MCF 10A (cell line): ENCODE measurements at regions of chr7 and their contacts with region 1.

Region 1: DNA sequence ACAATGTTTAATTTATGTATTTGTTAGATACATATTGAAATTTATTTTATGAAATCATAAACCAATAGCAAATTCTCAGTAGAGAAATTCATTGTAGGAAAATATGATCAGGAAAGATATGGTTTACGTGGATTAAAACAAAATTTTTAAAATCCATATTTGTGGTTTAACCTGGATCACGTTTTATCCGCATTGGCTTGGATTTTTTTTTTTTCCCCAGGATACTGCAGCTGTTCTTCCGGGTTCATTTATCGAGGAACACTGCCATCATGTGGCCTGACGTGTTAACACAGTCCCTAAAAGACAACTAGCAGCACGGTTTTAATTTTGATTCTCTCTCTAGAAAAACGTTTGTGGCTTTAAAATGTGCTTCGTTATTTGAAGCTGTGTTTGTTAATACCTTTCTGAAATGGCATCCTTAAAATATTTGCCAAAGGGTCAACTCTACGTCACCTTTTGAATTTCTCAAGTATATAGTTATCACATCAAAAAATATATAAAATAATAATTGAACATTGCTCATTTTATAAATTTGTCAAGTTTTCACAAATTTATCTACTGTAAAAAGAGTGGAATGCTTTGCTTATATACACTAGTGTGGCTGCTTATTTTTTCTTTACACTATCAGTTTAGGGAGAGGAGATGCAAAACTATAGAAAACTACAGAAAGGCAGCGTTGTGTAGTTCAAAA is 8.7 kb upstream of the ASB4 start:
- DNase-seq: peak; percentile 79
- H3K4me3 Mint-ChIP-seq: no peak overlapping the region
- H3K27ac Mint-ChIP-seq: no peak overlapping the region
- H3K4me1 Mint-ChIP-seq: peaks cover 10% of the 10 kb centered on the region
- H3K27me3 Mint-ChIP-seq: no peaks in the 10 kb centered on the region
- CTCF ChIP-seq: peak; percentile 72

Region 2: GRCh38 chr7:95041031-95041430 is 436.0 kb before region 1 on chr7:
- CTCF ChIA-PET with region 1: no interaction called
- POLR2A ChIA-PET with region 1: no interaction called
- intact Hi-C with region 1: no loop called
- DNase-seq: no peak
- H3K4me3 Mint-ChIP-seq: no peak overlapping the region
- H3K27ac Mint-ChIP-seq: no peak overlapping the region
- H3K4me1 Mint-ChIP-seq: no peaks in the 10 kb centered on the region
- H3K27me3 Mint-ChIP-seq: no peaks in the 10 kb centered on the region
- CTCF ChIP-seq: no peak

Region 3: GRCh38 chr7:95199779-95200558 is 277.1 kb before region 1 on chr7:
- CTCF ChIA-PET with region 1: interaction called, 7 read pairs
- POLR2A ChIA-PET with region 1: no interaction called
- intact Hi-C with region 1: loop called (anchors 1 kb)
- DNase-seq: peak; percentile 68
- H3K4me3 Mint-ChIP-seq: no peak overlapping the region
- H3K27ac Mint-ChIP-seq: no peak overlapping the region
- H3K4me1 Mint-ChIP-seq: no peaks in the 10 kb centered on the region
- H3K27me3 Mint-ChIP-seq: peaks cover 17% of the 10 kb centered on the region
- CTCF ChIP-seq: peak; percentile 48

Region 4: DNA sequence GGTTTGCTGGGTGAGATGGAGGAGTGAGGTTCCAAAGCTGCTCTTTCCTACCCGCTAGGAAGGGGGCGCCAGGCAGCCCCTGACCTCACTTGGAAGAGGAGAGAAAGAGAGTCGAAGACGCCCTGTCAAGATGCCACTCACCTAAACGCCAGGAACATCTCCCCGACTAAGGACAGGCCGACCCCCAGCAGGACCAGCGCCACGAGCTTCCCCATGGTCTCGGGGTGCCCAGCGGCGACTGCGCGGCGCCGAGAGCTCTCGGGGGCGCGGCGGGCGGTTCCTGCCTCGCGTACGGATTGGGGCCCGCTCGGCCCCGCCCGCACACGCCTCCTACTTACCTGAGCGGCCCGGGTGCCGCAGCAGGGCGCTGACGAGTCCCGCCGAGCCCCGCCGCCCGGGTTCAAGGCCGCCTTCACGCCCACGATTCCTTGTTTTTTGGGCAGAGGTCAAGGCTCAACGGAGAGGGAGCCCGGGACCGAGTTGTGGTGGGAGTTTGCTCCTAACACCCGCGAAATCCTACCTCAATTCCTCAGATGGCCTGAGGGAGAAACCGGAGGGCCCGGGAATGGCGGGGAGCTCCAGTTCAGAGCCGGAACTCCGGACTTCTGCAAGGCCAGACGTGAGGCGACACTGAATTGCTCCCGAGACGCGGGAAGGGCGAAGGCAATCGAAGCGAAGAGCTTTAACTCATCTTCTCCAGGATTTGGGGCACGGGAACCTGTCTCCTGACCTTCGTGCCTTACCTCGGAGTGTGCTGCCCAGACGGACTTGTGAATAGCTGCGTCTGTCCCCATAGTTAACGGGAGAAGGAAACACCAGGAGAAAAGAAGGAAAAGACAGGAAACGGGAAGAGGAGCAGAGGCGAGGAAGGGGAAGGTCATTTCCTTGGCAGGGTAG is 80.7 kb before region 1 on chr7 and contains the start of gene PON3:
- CTCF ChIA-PET with region 1: interaction called, 22 read pairs
- POLR2A ChIA-PET with region 1: interaction called, 5 read pairs
- intact Hi-C with region 1: loop called (anchors 10 kb)
- DNase-seq: no peak
- H3K4me3 Mint-ChIP-seq: no peak within 1 kb of the TSS
- H3K27ac Mint-ChIP-seq: no peak within 1 kb of the TSS
- H3K4me1 Mint-ChIP-seq: peaks cover 6% of the 10 kb centered on the region
- H3K27me3 Mint-ChIP-seq: no peaks in the 10 kb centered on the region
- CTCF ChIP-seq: no peak
- total RNA-seq, gene PON3: not detected in 2 replicates

Region 5: DNA sequence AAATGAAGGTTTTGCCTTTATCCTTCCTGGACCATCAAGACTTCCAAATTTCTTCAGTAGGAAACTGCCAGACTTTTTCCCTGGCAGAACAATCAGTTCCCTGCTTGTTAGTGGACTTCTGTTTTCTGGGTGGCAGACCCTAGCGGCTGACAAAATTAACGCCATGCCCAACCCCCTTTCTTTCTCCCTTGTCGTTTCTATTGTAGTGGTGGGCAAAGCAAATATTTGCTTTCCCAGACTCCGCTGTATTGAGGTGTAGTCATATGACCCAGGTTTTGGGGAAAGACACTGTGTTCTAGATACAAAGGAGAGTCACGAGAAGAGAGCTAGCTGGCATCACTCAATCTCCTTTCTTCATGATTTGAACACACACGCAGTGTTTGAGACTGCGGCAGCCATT is 49.9 kb before region 1 on chr7:
- CTCF ChIA-PET with region 1: interaction called, 11 read pairs
- POLR2A ChIA-PET with region 1: interaction called, 4 read pairs
- intact Hi-C with region 1: no loop called
- DNase-seq: no peak
- H3K4me3 Mint-ChIP-seq: no peak overlapping the region
- H3K27ac Mint-ChIP-seq: no peak overlapping the region
- H3K4me1 Mint-ChIP-seq: peaks cover 30% of the 10 kb centered on the region
- H3K27me3 Mint-ChIP-seq: no peaks in the 10 kb centered on the region
- CTCF ChIP-seq: no peak

Region 6: DNA sequence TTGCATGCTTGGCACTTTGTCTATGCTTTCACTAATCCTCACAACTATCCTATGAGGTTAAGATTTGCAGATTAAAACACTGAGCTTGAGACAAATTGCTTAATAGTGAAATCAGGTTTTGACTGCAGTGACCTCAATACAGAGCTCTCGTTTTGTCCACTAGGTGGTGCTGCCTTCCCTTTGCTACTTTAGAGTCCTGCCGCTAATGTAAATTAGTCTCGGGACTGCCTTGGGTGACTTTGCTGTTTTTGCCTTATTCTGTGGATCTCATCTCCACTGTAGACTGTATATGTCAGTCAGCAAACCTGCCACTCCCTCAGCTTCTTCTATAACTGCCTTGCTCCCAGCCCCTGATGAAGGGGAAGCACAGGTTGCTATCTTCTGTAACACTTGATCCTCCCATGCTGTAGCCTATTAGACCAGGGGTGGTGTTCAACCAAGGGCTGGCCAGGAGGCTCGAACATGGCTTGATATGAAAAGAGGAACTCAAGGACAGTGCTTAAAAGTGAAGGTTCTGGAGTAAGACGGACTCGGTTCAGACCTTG is 34.7 kb after region 1 on chr7:
- CTCF ChIA-PET with region 1: interaction called, 18 read pairs
- POLR2A ChIA-PET with region 1: no interaction called
- intact Hi-C with region 1: no loop called
- DNase-seq: peak; percentile 78
- H3K4me3 Mint-ChIP-seq: no peak overlapping the region
- H3K27ac Mint-ChIP-seq: no peak overlapping the region
- H3K4me1 Mint-ChIP-seq: no peaks in the 10 kb centered on the region
- H3K27me3 Mint-ChIP-seq: peaks cover 29% of the 10 kb centered on the region
- CTCF ChIP-seq: peak; percentile 59